ENCODE measurements at regions of chr13 and their contacts with region 1.

Region 1: DNA sequence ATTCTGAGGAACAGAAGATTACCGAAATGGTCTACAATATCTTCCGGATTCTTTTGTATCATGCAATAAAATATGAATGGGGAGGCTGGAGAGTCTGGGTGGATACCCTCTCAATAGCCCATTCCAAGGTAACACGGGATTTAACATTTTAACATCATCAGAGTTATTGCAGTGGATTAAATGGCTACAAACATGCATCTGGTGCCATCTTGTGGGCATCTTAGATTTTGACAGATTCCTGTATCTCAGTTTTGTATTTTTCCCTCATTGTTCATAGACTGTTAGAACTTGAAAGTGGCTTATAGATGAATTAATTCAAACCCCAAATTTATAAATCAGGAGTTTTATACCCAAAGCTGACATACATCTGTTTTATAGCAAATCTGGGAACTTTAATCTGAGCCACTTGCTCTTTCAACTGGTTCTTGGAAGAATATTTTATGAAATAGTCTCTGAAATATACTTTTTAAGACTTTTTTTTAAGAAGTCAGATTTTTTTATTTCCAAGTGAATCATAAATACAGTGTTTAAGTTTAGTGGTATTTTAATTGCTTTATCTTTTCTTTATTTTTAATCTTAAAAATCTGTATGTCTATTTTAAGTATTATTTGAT is 215.2 kb downstream of the NBEA start:
- DNase-seq: no peak
- H3K4me3 ChIP-seq: no peak overlapping the region
- H3K27ac ChIP-seq: peak overlapping the region in 1 of 4 donors; percentile 27
- H3K4me1 ChIP-seq: peaks cover 0 to 39% (median 8%) of the 10 kb centered on the region in 4 donors
- H3K27me3 ChIP-seq: no peaks in the 10 kb centered on the region
- CTCF ChIP-seq: peak; percentile 38 to 68 (median 64)
- EP300 ChIP-seq: no peak
- POLR2A ChIP-seq: no peak

Region 2: DNA sequence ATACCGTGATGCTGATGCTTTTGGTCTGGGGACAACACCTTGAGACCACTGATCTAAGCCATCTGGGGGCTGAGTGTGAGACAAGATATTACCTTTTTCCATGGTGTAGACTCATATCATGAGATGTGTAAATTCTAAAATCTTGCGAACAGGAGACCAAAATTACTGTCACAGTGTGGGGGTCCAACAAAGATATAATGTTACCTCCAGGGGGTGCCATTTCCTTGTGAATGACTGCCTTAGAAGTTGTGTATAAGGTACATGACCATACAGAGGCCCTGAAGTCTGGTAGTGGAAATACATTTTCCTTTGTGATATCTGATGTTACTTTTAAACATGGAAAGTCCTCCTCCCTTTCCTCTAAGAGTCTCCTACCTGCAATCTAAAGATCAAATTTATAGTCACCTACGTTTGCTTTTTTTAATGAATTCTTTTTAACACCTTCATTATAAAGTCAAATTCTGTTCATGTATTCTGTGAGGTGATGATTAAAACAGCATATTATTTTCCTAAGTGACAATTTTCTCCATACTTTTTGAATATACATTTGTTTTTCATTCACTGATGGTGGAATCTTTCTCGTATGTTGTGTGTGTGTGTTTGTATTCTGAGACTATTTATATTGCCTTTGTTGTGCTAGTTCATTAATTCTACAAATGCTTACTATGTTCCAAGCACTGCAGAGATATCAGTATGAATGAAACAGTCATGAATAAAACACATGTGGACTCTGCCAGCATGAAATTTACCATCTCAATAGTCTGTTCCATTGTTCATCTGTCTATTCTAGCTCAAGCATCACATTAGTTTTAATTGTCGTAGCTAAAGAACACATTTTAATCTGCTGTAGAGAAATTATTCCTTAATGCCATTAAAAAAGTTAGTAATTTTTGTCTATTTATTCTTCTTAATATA is 1225.6 kb before region 1 on chr13:
- intact Hi-C with region 1: loop called (anchors 2 kb)
- DNase-seq: no peak
- H3K4me3 ChIP-seq: no peak overlapping the region
- H3K27ac ChIP-seq: no peak overlapping the region
- H3K4me1 ChIP-seq: peaks cover 0 to 5% (median 0%) of the 10 kb centered on the region in 4 donors
- H3K27me3 ChIP-seq: no peaks in the 10 kb centered on the region
- CTCF ChIP-seq: peak in 3 of 4 experiments; percentile 39 to 52 (median 46)
- EP300 ChIP-seq: no peak
- POLR2A ChIP-seq: no peak

Region 3: GRCh38 chr13:34156841-34157365 is 1000.3 kb before region 1 on chr13:
- intact Hi-C with region 1: loop called (anchors 10 kb)
- DNase-seq: peak; percentile 87
- H3K4me3 ChIP-seq: no peak overlapping the region
- H3K27ac ChIP-seq: peak overlapping the region; percentile 15 to 82 (median 78)
- H3K4me1 ChIP-seq: peaks cover 0 to 37% (median 30%) of the 10 kb centered on the region in 4 donors
- H3K27me3 ChIP-seq: no peaks in the 10 kb centered on the region
- CTCF ChIP-seq: no peak
- EP300 ChIP-seq: no peak
- POLR2A ChIP-seq: no peak

Region 4: DNA sequence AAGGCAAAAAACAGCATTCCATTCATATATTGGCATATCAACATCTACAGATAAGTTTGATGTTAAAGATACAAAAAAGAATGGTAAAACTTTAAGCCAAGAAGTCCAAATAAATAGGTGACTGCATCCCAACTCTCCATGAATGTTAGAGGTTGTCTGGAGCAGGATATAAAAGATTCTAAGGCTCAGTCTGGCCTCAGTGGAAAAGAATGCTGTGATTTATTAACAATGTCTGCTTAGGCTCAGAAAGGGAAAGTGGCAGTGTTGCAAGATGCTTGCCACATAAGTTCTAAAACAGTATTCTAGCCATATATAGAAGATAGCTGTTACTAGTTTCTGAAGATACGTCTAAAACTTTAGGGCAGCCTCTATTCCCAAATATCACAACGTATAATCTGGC is 394.9 kb before region 1 on chr13:
- intact Hi-C with region 1: loop called (anchors 10 kb)
- DNase-seq: no peak
- H3K4me3 ChIP-seq: no peak overlapping the region
- H3K27ac ChIP-seq: peak overlapping the region in 3 of 4 donors; percentile 66 to 83 (median 67)
- H3K4me1 ChIP-seq: peaks cover 0 to 24% (median 10%) of the 10 kb centered on the region in 4 donors
- H3K27me3 ChIP-seq: no peaks in the 10 kb centered on the region
- CTCF ChIP-seq: no peak
- EP300 ChIP-seq: peak in 3 of 4 donors; percentile 57 to 79 (median 60)
- POLR2A ChIP-seq: no peak

Region 5: GRCh38 chr13:34941835-34942731 is 215.2 kb before region 1 on chr13 and contains the start of gene NBEA:
- intact Hi-C with region 1: loop called (anchors 5 kb)
- DNase-seq: peak; percentile 85
- H3K4me3 ChIP-seq: peak within 1 kb of the TSS; percentile 90 to 97 (median 90)
- H3K27ac ChIP-seq: peak within 1 kb of the TSS; percentile 85 to 95 (median 90)
- H3K4me1 ChIP-seq: peaks cover 0 to 41% (median 9%) of the 10 kb centered on the region in 4 donors
- H3K27me3 ChIP-seq: no peaks in the 10 kb centered on the region
- CTCF ChIP-seq: peak in 3 of 4 experiments; percentile 12 to 44 (median 37)
- EP300 ChIP-seq: no peak
- POLR2A ChIP-seq: peak in 1 of 2 donors; percentile 24
- total RNA-seq, gene NBEA: 38.0 to 47.6 (median 43.3) TPM

Region 6: GRCh38 chr13:35086667-35087066 is 70.6 kb before region 1 on chr13:
- intact Hi-C with region 1: no loop called
- DNase-seq: no peak
- H3K4me3 ChIP-seq: no peak overlapping the region
- H3K27ac ChIP-seq: no peak overlapping the region
- H3K4me1 ChIP-seq: no peaks in the 10 kb centered on the region
- H3K27me3 ChIP-seq: no peaks in the 10 kb centered on the region
- CTCF ChIP-seq: no peak
- EP300 ChIP-seq: no peak
- POLR2A ChIP-seq: no peak

Measured in sigmoid colon (tissue), 7 donors.